ENCODE measurements at regions of chr4 and their contacts with region 1.

Region 1: GRCh38 chr4:20532871-20533870 is 167.1 kb upstream of the PACRGL start:
- DNase-seq: no peak
- H3K4me3 ChIP-seq: no peak overlapping the region
- H3K27ac ChIP-seq: no peak overlapping the region
- H3K4me1 ChIP-seq: peaks cover 14% of the 10 kb centered on the region
- H3K27me3 ChIP-seq: no peaks in the 10 kb centered on the region
- CTCF ChIP-seq: no peak

Region 2: DNA sequence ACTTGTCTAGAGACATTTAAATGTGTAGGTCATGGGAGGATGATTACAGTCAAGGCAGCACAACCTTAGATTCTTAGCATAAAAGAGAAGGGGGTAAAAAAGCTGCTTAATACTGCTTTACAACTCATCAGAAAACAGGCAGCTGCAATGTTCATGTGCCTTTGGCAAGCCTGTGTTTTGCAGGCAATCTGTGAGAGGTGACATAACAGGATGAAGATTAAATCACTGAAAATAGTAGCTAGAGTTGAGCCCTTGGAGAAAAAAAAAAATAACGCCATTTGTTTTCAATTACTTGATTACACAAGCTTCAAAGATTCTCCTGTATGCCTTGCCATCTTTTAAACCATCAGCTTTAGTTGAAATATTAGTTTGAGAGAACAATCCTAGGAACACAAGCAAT is 1664.0 kb before region 1 on chr4:
- CTCF ChIA-PET with region 1: no interaction called
- POLR2A ChIA-PET with region 1: interaction called, 11 read pairs
- intact Hi-C with region 1: no loop called
- DNase-seq: no peak
- H3K4me3 ChIP-seq: no peak overlapping the region
- H3K27ac ChIP-seq: no peak overlapping the region
- H3K4me1 ChIP-seq: no peaks in the 10 kb centered on the region
- H3K27me3 ChIP-seq: no peaks in the 10 kb centered on the region
- CTCF ChIP-seq: no peak

Region 3: DNA sequence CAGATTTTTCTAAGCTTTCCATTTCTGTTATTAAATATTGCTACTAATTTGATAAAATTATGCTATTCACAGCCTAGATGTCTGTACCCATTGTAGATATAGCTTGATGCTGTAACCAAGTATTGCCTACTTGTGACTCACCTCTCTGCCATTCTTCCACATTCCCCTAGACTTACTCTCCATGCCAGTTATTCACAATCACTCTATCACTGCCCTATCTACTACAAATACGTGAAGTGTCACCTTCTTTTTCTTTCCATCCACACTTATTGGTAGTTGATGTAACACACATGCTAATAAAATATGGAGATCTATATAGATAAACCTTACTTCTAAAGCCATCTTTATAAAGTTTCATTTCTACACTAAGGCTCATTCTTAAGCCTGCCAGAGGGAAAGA is 12.3 kb before region 1 on chr4:
- CTCF ChIA-PET with region 1: no interaction called
- POLR2A ChIA-PET with region 1: no interaction called
- intact Hi-C with region 1: no loop called
- DNase-seq: no peak
- H3K4me3 ChIP-seq: no peak overlapping the region
- H3K27ac ChIP-seq: no peak overlapping the region
- H3K4me1 ChIP-seq: no peaks in the 10 kb centered on the region
- H3K27me3 ChIP-seq: no peaks in the 10 kb centered on the region
- CTCF ChIP-seq: no peak

Measured in A673 (cell line).